WTC11 (cell line): ENCODE measurements at regions of chr12 and their contacts with region 1.

Region 1: DNA sequence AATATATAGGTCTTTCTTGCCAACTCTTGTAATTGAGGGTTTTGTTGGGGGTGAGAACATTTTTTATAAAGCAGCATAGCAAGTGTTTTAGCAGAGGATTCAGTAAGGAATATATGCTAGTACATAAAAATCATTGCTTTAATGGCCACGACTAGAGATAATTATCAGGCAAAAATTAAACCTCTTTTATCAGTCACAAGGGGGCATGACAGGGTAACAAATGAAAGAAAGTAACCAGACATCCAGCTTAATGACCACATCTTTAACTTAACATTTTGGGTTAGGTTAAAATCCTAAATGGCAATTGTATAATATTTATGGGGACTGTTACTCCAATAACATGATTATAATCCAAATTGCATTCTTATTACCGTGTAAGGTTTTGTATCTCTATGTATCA is 119.6 kb downstream of the LRRIQ1 start:
- DNase-seq: no peak
- ATAC-seq: 0 out of 2 replicates have a peak, but pooled peaks have one; percentile 28
- H3K4me3 Mint-ChIP-seq: no peak overlapping the region
- H3K27ac Mint-ChIP-seq: no peak overlapping the region
- H3K4me1 Mint-ChIP-seq: no peaks in the 10 kb centered on the region
- H3K27me3 Mint-ChIP-seq: no peaks in the 10 kb centered on the region
- CTCF ChIP-seq: no peak

Region 2: GRCh38 chr12:85138833-85139232 is 17.0 kb before region 1 on chr12:
- CTCF ChIA-PET with region 1: no interaction called
- POLR2A ChIA-PET with region 1: no interaction called
- DNase-seq: no peak
- ATAC-seq: no peak
- H3K4me3 Mint-ChIP-seq: no peak overlapping the region
- H3K27ac Mint-ChIP-seq: no peak overlapping the region
- H3K4me1 Mint-ChIP-seq: peaks cover 8% of the 10 kb centered on the region
- H3K27me3 Mint-ChIP-seq: no peaks in the 10 kb centered on the region
- CTCF ChIP-seq: no peak

Region 3: DNA sequence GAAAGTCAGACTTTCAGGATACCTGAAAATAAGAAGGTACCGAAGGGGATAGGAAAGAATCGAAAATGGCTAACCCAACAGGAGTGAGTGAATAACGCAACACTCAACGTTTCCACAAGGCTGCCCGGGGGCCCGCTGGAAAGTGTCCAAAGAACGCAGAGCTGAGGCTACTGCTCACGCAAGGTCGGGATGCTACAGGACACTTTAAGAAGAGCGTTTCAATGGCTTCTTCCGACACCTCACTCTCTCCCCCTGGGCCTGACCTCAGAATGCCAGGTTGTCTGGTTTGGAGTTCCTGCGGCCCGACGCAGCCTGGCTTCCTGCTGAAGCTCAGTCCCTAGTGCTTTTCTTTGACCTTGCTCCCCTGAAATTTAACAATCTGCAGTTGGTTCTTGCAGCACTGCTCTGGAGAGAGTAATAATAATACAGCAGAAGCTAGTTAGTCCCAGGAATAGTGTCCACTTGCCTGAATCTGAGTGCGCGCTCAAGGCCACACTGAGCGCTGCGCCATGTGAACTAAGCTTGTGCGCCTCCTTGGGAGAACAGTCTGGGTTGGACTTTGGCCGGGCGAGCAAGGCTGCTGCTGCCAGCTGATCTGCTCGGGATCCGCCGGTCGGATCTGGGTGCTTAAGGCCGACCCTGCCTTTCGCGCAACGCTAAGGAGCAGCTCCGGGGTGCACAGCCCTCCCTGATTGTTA is 122.3 kb after region 1 on chr12:
- CTCF ChIA-PET with region 1: interaction called, 10 read pairs
- POLR2A ChIA-PET with region 1: no interaction called
- DNase-seq: peak; percentile 60
- ATAC-seq: peak; percentile 37
- H3K4me3 Mint-ChIP-seq: peak overlapping the region; percentile 98
- H3K27ac Mint-ChIP-seq: no peak overlapping the region
- H3K4me1 Mint-ChIP-seq: peaks cover 46% of the 10 kb centered on the region
- H3K27me3 Mint-ChIP-seq: peaks cover 85% of the 10 kb centered on the region
- CTCF ChIP-seq: no peak